ENCODE measurements at regions of chr2 and their contacts with region 1.

Region 1: DNA sequence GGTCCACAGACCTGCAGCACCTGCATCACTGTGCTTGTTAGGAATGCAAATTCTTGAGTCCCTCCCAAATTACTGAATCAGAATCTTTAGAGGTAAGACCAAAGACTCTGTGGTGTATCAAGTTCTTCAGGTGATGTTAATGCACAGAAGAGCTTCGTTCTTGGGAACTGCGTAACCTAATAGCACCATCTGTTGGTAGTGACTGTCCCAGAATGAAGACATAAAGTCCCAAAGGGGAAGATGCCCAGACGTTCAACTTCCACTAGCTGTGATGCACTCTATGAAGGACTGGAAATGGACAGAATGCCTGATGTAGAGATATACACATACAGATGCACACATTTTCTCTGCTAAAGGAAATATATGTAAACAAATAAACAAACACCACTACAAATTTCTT is 576.0 kb downstream of the LRP1B start:
- DNase-seq: peak; percentile 45
- H3K4me3 ChIP-seq: no peak overlapping the region
- H3K27ac ChIP-seq: no peak overlapping the region
- H3K4me1 ChIP-seq: peaks cover 15% of the 10 kb centered on the region
- H3K27me3 ChIP-seq: no peaks in the 10 kb centered on the region
- CTCF ChIP-seq: peak; percentile 34 to 70

Region 2: DNA sequence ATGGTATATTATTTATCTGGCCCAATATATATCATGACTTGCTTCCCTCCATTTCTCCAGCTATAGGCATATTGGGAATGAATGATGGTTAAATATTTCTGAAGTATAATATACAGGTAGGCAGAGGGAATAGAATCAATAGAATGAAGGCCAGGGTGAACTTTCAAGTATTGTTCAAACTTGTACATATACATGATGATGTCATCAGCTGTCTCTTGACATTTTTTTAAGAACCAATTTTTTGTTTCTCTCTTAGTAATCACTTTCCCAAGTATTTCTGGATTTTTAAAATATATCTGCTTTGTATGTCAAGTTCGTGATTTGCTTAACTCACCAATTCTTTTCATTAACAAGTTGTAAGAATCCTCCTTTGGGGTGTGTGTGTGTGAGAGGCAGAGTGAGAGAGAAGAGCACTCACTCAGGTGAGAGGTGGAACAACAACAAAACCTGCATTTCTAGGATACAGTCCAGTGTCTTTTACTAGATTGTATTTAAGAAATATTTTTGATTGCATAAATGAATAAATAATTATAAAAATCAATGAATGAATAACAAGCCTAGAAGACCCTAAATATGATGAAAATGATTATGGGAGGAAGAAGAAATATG is 663.1 kb before region 1 on chr2:
- CTCF ChIA-PET with region 1: no interaction called
- dilution Hi-C with region 1: no loop called
- in situ Hi-C with region 1: no loop called
- intact Hi-C with region 1: loop called (anchors 10 kb)
- DNase-seq: peak; percentile 12
- H3K4me3 ChIP-seq: no peak overlapping the region
- H3K27ac ChIP-seq: no peak overlapping the region
- H3K4me1 ChIP-seq: peaks cover 23% of the 10 kb centered on the region
- H3K27me3 ChIP-seq: no peaks in the 10 kb centered on the region
- CTCF ChIP-seq: peak; percentile 27 to 43

Region 3: GRCh38 chr2:141029424-141030078 is 525.3 kb before region 1 on chr2:
- CTCF ChIA-PET with region 1: no interaction called
- dilution Hi-C with region 1: no loop called
- in situ Hi-C with region 1: no loop called
- intact Hi-C with region 1: no loop called
- DNase-seq: no peak
- H3K4me3 ChIP-seq: no peak overlapping the region
- H3K27ac ChIP-seq: no peak overlapping the region
- H3K4me1 ChIP-seq: no peaks in the 10 kb centered on the region
- H3K27me3 ChIP-seq: no peaks in the 10 kb centered on the region
- CTCF ChIP-seq: no peak

Region 4: GRCh38 chr2:141911485-141912066 is 356.8 kb after region 1 on chr2:
- CTCF ChIA-PET with region 1: no interaction called
- dilution Hi-C with region 1: no loop called
- in situ Hi-C with region 1: no loop called
- intact Hi-C with region 1: loop called (anchors 5 kb)
- DNase-seq: peak; percentile 39
- H3K4me3 ChIP-seq: no peak overlapping the region
- H3K27ac ChIP-seq: no peak overlapping the region
- H3K4me1 ChIP-seq: peaks cover 4% of the 10 kb centered on the region
- H3K27me3 ChIP-seq: no peaks in the 10 kb centered on the region
- CTCF ChIP-seq: peak; percentile 40 to 46

Measured in mammary epithelial cell (primary cell).